Activated CD4-positive, alpha-beta T cell treated with anti-CD3 and anti-CD28 coated beads, Interleukin-2, amount 10 ng/mL, durations not matched to agents 7 days and 5 days (primary cell): ENCODE measurements at regions of chr17 and their contacts with region 1.

Region 1: DNA sequence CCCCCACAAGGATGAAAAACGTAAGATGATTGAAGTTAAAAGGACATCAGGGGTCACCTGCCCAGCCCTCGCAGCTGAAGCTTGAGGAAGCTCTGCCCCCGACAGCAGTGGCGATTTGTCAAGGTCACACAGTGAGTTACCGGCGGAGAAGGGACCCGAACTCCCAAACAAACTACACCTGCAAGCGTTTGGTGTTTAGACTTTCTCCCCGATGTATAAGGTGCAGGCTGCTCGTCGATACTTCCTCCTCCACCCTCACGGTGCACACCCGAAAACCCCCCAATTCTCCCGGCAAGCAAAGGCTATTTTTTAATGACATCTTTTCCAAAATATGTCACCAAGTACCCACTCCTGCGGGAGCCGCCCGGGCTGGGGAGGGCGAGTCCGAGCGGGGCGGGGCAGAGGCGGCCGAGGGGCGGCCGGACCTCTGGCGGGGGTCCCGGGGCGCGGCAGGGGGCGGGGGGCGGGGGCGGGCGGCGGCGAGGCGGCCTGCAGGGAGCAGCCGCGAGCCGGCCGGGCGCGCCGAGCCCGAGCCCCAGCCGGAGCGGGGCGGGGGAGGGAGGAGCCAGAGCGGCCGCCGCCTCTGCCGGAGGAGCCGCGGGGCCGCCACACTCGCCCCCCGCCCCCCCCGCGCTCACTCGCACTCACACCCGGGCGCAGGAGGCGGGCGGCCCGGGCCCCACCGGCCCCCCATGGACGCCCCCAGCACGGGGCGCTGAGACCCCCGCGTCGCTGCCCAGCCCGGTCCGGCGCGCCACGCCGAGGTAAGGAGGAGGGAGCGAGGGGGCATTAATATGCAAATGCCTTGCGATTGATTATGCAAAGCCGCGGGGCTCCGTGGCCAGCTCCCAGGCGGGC is at the start of gene THRA:
- DNase-seq: peak; percentile 65
- H3K4me3 Mint-ChIP-seq: peak within 1 kb of the TSS; percentile 81
- H3K27ac Mint-ChIP-seq: peak within 1 kb of the TSS; percentile 41
- H3K4me1 Mint-ChIP-seq: peaks cover 41% of the 10 kb centered on the region
- H3K27me3 Mint-ChIP-seq: peaks cover 40% of the 10 kb centered on the region
- total RNA-seq, gene THRA: 8.6 to 9.1 TPM

Region 2: DNA sequence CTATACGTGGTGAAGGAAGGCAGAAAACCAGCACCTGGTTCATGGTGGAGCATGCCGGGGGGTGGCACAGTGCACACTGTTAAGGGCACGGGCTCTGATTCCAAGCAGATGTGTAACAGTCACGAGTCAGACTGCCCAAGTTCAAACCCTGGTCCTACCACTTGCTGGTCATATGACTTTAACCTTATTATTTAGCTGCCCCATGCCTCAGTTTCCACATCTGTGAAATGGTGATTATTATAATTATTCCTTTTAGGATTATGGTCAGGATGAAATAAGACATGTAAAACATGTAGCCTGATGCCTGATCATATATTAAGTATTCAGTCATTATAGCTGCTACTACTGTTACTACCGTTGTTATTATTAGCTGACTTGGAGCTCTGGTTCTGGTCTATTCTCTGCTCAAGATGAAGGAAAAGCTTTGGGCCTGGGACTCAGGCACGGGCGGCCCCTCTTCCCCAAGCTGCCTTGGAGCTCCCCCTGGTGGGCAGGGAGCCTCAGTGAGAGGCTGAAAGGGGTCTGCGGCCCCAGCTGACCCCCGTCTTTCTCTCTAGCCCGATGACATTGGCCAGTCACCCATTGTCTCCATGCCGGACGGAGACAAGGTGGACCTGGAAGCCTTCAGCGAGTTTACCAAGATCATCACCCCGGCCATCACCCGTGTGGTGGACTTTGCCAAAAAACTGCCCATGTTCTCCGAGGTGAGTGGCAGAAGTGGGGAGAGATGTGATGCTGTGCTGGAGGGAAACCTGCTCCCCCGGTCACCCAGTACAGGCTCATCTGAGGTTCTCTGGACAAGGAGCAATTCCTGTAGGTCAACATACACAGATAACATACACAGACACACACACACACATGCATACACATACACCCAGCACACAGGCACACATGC is 23.8 kb after region 1 on chr17:
- CTCF ChIA-PET with region 1: interaction called, 10 read pairs
- POLR2A ChIA-PET with region 1: no interaction called
- DNase-seq: peak; percentile 58
- H3K4me3 Mint-ChIP-seq: no peak overlapping the region
- H3K27ac Mint-ChIP-seq: no peak overlapping the region
- H3K4me1 Mint-ChIP-seq: peaks cover 8% of the 10 kb centered on the region
- H3K27me3 Mint-ChIP-seq: no peaks in the 10 kb centered on the region

Region 3: GRCh38 chr17:40104594-40105486 is 42.3 kb after region 1 on chr17:
- CTCF ChIA-PET with region 1: no interaction called
- POLR2A ChIA-PET with region 1: no interaction called
- DNase-seq: no peak
- H3K4me3 Mint-ChIP-seq: no peak overlapping the region
- H3K27ac Mint-ChIP-seq: peak overlapping the region; percentile 26
- H3K4me1 Mint-ChIP-seq: peaks cover 88% of the 10 kb centered on the region
- H3K27me3 Mint-ChIP-seq: peaks cover 3% of the 10 kb centered on the region

Region 4: DNA sequence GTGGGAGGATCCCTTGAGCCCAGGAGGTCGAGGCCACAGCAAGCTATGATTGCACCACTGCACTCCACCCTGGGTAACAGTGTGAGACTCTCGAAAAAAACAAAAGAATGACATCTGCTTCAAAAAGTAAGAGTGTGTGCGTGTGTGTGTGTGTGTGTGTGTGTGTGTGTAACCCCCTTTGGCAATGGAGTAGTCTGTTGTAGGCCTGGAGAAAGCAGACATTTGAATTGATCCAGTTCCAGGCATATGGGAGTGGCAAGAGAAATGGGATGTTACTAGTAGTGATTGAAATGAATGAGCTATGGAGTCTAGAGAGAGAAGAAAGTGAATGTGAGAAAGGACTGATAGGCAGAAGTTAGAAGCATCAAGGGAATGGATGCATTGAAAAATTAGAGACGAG is 87.7 kb after region 1 on chr17:
- CTCF ChIA-PET with region 1: no interaction called
- POLR2A ChIA-PET with region 1: no interaction called
- DNase-seq: no peak
- H3K4me3 Mint-ChIP-seq: no peak overlapping the region
- H3K27ac Mint-ChIP-seq: no peak overlapping the region
- H3K4me1 Mint-ChIP-seq: peaks cover 46% of the 10 kb centered on the region
- H3K27me3 Mint-ChIP-seq: no peaks in the 10 kb centered on the region